ENCODE measurements at regions of chr19 and their contacts with region 1.

Region 1: DNA sequence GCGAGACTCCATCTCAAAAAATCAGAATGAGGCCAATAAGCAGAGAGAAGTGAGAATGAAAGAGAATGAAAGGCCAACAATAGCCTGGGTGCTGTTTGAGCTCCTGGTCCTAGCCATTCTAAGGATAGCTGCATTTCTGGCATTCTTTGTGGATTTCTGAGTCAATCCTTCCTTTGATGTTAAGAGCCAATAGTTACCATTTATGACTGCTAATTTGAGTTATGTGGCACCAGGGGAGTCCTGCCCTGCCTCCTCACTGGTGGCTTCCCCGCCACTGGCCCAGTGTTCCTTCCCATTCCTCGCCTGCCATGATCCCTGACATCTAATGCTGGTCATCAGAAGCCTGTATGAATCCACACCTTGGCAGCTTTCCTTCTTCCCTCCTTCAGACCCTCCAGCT is 991.2 kb downstream of the UQCRFS1 start:
- DNase-seq: no peak
- H3K4me3 ChIP-seq: no peak overlapping the region
- H3K27ac ChIP-seq: no peak overlapping the region
- H3K4me1 ChIP-seq: no peaks in the 10 kb centered on the region
- H3K27me3 ChIP-seq: no peaks in the 10 kb centered on the region
- CTCF ChIP-seq: no peak
- EP300 ChIP-seq: no peak
- POLR2A ChIP-seq: no peak

Region 2: DNA sequence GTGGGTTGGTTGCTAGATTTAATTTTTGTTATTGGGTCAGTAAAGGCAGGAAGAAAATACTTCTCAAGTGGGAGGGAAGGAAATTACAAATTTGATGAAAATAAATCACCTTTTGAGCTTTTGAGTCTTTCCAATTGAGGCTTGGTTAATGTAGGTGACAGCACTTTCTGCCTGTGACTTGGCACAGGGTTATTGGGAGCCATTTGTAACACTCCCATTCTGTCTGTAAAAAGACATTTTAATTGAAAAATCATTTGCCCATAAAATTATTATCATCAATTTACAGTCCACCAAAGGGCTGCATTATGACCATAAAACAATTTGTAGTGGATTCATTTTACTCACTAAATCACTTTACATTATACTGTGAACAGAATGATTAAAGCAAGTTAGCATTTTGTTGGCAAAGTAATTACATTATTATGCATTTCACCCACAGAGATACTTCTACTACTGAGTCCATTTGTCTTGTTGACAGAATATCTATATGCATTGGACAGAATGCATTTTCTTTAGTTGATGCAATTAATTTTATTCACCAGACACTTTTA is 16.6 kb after region 1 on chr19:
- intact Hi-C with region 1: loop called in 1 of 4 experiments (anchors 1 kb)
- DNase-seq: no peak
- H3K4me3 ChIP-seq: no peak overlapping the region
- H3K27ac ChIP-seq: no peak overlapping the region
- H3K4me1 ChIP-seq: no peaks in the 10 kb centered on the region
- H3K27me3 ChIP-seq: no peaks in the 10 kb centered on the region
- CTCF ChIP-seq: no peak
- EP300 ChIP-seq: no peak
- POLR2A ChIP-seq: no peak